ENCODE measurements at regions of chr12 and their contacts with region 1.

Region 1: GRCh38 chr12:107992870-107993451 is 136.1 kb upstream of the WSCD2 start:
- DNase-seq: peak; percentile 8
- ATAC-seq: no peak
- H3K4me3 ChIP-seq: no peak overlapping the region
- H3K4me3 Mint-ChIP-seq: no peak overlapping the region
- H3K27ac ChIP-seq: no peak overlapping the region
- H3K27ac Mint-ChIP-seq: no peak overlapping the region
- H3K4me1 ChIP-seq: no peaks in the 10 kb centered on the region
- H3K4me1 Mint-ChIP-seq: no peaks in the 10 kb centered on the region
- H3K27me3 ChIP-seq: peaks cover 0 to 3% (median 0%) of the 10 kb centered on the region in 4 experiments
- H3K27me3 Mint-ChIP-seq: peaks cover 37% of the 10 kb centered on the region
- CTCF ChIP-seq: peak; percentile 26

Region 2: GRCh38 chr12:107337346-107338095 is 655.4 kb before region 1 on chr12:
- CTCF ChIA-PET with region 1: no interaction called
- POLR2A ChIA-PET with region 1: no interaction called
- intact Hi-C with region 1: no loop called
- DNase-seq: no peak
- ATAC-seq: no peak
- H3K4me3 ChIP-seq: no peak overlapping the region
- H3K4me3 Mint-ChIP-seq: no peak overlapping the region
- H3K27ac ChIP-seq: no peak overlapping the region
- H3K27ac Mint-ChIP-seq: no peak overlapping the region
- H3K4me1 ChIP-seq: no peaks in the 10 kb centered on the region
- H3K4me1 Mint-ChIP-seq: no peaks in the 10 kb centered on the region
- H3K27me3 ChIP-seq: no peaks in the 10 kb centered on the region
- H3K27me3 Mint-ChIP-seq: peaks cover 22% of the 10 kb centered on the region
- CTCF ChIP-seq: no peak

Region 3: DNA sequence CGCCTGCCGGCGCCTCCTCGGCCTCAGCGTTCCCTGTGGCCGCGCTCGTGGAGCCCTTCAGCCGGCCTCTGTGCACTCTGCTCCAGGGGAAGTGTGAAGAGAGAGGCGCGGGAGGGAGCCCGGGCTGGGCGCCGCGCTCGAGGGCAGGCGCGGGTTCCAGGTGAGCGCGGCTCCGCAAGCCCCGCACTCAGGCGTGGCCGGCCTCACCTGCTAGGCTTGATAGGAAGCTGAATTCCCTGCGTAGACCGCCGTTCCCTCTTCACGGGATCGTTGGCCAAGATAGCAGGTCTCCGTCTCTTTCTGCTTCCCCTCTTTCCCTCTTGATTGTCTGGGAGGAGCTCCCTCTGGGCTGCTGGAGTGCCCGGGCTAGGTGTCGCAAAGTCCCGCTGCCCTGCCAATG is 128.7 kb before region 1 on chr12:
- CTCF ChIA-PET with region 1: no interaction called
- POLR2A ChIA-PET with region 1: no interaction called
- intact Hi-C with region 1: no loop called
- DNase-seq: no peak
- ATAC-seq: no peak
- H3K4me3 ChIP-seq: no peak overlapping the region
- H3K4me3 Mint-ChIP-seq: no peak overlapping the region
- H3K27ac ChIP-seq: no peak overlapping the region
- H3K27ac Mint-ChIP-seq: no peak overlapping the region
- H3K4me1 ChIP-seq: no peaks in the 10 kb centered on the region
- H3K4me1 Mint-ChIP-seq: no peaks in the 10 kb centered on the region
- H3K27me3 ChIP-seq: peaks cover 0 to 4% (median 3%) of the 10 kb centered on the region in 4 experiments
- H3K27me3 Mint-ChIP-seq: peaks cover 70% of the 10 kb centered on the region
- CTCF ChIP-seq: no peak

Region 4: GRCh38 chr12:108193917-108194316 is 201.0 kb after region 1 on chr12:
- CTCF ChIA-PET with region 1: interaction called, 3 read pairs
- POLR2A ChIA-PET with region 1: no interaction called
- intact Hi-C with region 1: loop called (anchors 5 kb)
- DNase-seq: peak; percentile 44
- ATAC-seq: no peak
- H3K4me3 ChIP-seq: no peak overlapping the region
- H3K4me3 Mint-ChIP-seq: no peak overlapping the region
- H3K27ac ChIP-seq: no peak overlapping the region
- H3K27ac Mint-ChIP-seq: no peak overlapping the region
- H3K4me1 ChIP-seq: peaks cover 0 to 3% of the 10 kb centered on the region in 2 donors
- H3K4me1 Mint-ChIP-seq: peaks cover 11% of the 10 kb centered on the region
- H3K27me3 ChIP-seq: no peaks in the 10 kb centered on the region
- H3K27me3 Mint-ChIP-seq: peaks cover 3% of the 10 kb centered on the region
- CTCF ChIP-seq: peak; percentile 66